Dorsolateral prefrontal cortex (tissue), 120 donors: ENCODE measurements at regions of chr15 and their contacts with region 1.

Region 1: DNA sequence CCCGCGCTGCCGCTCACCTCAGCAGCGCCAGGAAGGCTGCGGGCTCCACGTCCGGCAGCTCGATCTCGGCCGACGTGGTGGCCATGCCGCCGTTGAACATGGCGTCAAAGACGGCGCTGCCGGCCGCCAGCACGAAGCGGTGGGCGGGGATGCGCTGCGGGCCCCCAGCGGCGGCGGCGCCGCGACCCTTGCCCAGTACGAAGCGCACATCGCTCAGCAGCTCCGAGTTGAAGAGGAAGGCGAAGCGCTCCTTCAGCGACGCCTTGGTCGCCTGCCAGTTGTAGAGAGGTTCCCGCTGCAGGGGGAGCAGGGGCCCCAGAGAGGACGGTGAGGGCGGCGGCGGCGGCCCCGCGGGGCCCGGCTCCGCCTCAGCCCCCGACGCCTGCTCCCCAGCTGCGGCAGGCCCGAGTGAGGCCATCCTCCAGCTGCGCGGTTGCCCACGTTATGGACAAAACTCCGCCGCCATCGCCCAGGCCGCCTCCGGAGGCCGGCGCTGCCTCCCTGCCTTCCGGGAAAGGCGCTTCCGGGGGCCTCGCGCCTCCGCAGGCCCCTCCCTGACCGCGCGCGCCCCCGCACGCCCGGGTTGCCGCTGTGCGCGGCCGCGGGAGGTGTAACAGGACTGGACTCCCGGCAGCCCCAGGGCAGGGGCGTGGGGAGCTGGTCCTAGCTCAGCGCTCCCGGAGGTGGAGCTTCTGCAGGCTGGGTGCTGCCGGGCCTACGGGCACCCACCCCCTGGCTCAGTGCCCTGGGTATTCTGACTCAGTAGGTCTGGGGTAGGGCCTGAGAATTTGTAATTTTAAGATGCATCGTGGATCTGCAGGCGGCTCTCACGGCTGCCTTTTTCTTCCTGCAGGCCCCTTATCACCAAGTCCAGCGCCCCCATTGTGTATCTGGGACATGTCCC is at the start of gene BTBD1:
- DNase-seq: peak; percentile 73 to 95 (median 88)
- H3K4me3 ChIP-seq: peak within 1 kb of the TSS; percentile 68 to 98 (median 91)
- H3K27ac ChIP-seq: peak within 1 kb of the TSS; percentile 72 to 99 (median 96)
- H3K27me3 ChIP-seq: no peaks in the 10 kb centered on the region
- CTCF ChIP-seq: peak in 48 of 56 donors; percentile 13 to 69 (median 36)
- total RNA-seq, gene BTBD1: 61.4 to 113 (median 85.9) TPM

Region 2: GRCh38 chr15:82809404-82810060 is 257.5 kb before region 1 on chr15 and contains the start of gene WHAMM:
- intact Hi-C with region 1: no loop called
- DNase-seq: peak; percentile 97 to 99 (median 98)
- H3K4me3 ChIP-seq: peak within 1 kb of the TSS; percentile 61 to 95 (median 86)
- H3K27ac ChIP-seq: peak within 1 kb of the TSS; percentile 90 to 100 (median 97)
- H3K27me3 ChIP-seq: no peaks in the 10 kb centered on the region
- CTCF ChIP-seq: peak in 29 of 56 donors; percentile 11 to 51 (median 27)
- total RNA-seq, gene WHAMM: 7.8 to 16.0 (median 11.1) TPM

Region 3: GRCh38 chr15:83108266-83109226 is 41.6 kb after region 1 on chr15:
- intact Hi-C with region 1: loop called in 1 of 2 experiments (anchors 5 kb)
- DNase-seq: peak in 8 of 10 donors; percentile 16 to 54 (median 50)
- H3K4me3 ChIP-seq: peak overlapping the region in 58 of 59 donors; percentile 21 to 75 (median 62)
- H3K27ac ChIP-seq: peak overlapping the region in 52 of 59 donors; percentile 15 to 91 (median 74)
- H3K27me3 ChIP-seq: peaks cover 0 to 25% (median 7%) of the 10 kb centered on the region in 45 donors
- CTCF ChIP-seq: no peak

Region 4: DNA sequence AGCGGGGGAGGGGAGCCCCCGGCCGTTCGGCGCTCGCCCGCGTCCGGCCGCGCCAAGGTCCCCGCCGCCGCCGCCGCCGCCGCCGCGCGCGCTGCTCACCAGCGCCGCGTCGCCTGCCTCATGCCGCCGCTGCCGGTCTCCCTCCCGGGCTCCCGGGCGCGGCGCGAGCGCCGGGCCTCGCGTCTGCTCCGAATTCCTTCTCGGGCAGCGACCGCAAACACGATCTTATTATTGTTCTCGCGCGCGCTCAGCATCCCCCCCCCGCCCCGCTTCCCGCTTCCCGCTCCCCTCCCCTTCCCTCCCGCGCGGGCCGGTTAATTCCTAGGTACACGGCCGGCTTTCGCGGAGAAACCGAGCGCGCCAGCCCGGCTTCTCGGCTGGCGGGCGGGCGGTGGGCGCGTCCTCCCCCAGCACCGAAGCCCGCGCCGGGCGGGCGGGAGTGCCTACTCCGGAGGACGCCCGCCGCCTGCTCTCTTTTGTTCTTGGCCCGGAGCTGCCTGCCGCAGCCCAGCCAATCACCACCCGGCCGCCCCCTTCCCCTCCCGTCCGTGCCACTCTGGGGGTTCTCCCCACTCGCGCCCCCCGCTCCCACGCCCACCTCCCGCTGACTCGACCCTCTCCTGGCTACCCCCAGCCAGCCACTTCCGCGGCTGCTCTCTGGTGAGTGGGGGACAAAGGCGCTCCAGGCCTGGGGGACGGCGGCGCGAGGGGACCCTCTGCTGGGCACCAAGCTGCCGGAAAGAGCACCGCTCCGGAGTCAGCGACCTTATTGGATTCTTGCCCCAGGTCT is 140.8 kb after region 1 on chr15 and contains the start of gene HDGFL3:
- intact Hi-C with region 1: loop called (anchors 2 to 5 kb)
- DNase-seq: peak; percentile 39 to 78 (median 62)
- H3K4me3 ChIP-seq: peak within 1 kb of the TSS; percentile 61 to 96 (median 86)
- H3K27ac ChIP-seq: peak within 1 kb of the TSS in 58 of 59 donors; percentile 46 to 95 (median 87)
- H3K27me3 ChIP-seq: no peaks in the 10 kb centered on the region
- CTCF ChIP-seq: peak in 4 of 56 donors; percentile 8 to 26 (median 12)
- total RNA-seq, gene HDGFL3: 80.3 to 166 (median 119) TPM